Endothelial cell of umbilical vein (primary cell): ENCODE measurements at regions of chr14 and their contacts with region 1.

Region 1: DNA sequence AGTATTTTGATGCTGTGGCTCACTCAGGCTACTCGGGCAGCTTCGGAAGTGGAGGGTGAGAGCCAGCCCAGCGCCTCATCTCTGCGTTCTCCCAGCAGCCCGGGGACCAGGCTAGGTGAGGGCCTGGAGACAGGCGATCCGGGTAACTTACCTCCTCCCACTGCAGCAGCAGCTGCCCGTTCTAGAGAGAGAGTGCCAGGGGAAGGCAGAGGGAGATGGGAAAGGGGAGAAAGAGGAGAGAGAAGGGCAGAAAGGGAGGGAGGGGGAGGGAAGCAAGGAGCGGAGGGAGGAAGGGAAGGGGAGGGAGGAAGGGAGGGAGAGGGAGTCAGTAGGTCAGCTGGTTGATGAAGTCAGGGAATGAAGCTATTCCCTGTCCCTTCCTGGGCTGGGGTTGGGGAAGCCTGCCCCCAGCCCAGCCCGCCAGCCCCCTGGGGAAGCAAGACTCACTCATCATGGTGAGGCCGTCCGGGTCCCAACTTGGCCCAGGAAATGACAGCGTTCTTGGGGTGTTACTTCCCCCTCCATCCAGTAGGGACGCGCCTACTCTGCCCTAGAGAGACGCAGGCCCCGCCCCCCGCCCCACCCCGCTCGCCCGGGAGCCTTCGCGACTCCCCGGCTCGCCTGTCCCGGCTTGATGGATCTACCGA is at the start of gene IFI27L2:
- DNase-seq: peak; percentile 59
- H3K4me3 ChIP-seq: peak within 1 kb of the TSS; percentile 27 to 67 (median 45)
- H3K27ac ChIP-seq: no peak within 1 kb of the TSS
- H3K4me1 ChIP-seq: peaks cover 9% of the 10 kb centered on the region
- H3K27me3 ChIP-seq: peaks cover 0 to 5% of the 10 kb centered on the region in 2 experiments
- CTCF ChIP-seq: peak in 1 of 2 donors; percentile 20
- POLR2A ChIP-seq: no peak
- total RNA-seq, gene IFI27L2: 11.0 and 28.7 TPM in 2 replicates

Region 2: GRCh38 chr14:93939304-93940229 is 189.7 kb before region 1 on chr14:
- CTCF ChIA-PET with region 1: interaction called, 14 read pairs
- POLR2A ChIA-PET with region 1: no interaction called
- dilution Hi-C with region 1: no loop called
- intact Hi-C with region 1: no loop called
- DNase-seq: peak; percentile 53
- H3K4me3 ChIP-seq: no peak overlapping the region
- H3K27ac ChIP-seq: no peak overlapping the region
- H3K4me1 ChIP-seq: no peaks in the 10 kb centered on the region
- H3K27me3 ChIP-seq: peaks cover 0 to 3% of the 10 kb centered on the region in 2 experiments
- CTCF ChIP-seq: peak; percentile 74 to 77
- POLR2A ChIP-seq: no peak

Region 3: GRCh38 chr14:94036313-94037050 is 92.8 kb before region 1 on chr14:
- CTCF ChIA-PET with region 1: interaction called, 45 read pairs
- POLR2A ChIA-PET with region 1: no interaction called
- dilution Hi-C with region 1: no loop called
- intact Hi-C with region 1: loop called (anchors 1 kb)
- DNase-seq: peak; percentile 69
- H3K4me3 ChIP-seq: no peak overlapping the region
- H3K27ac ChIP-seq: no peak overlapping the region
- H3K4me1 ChIP-seq: no peaks in the 10 kb centered on the region
- H3K27me3 ChIP-seq: no peaks in the 10 kb centered on the region
- CTCF ChIP-seq: peak; percentile 83 to 87
- POLR2A ChIP-seq: no peak

Region 4: DNA sequence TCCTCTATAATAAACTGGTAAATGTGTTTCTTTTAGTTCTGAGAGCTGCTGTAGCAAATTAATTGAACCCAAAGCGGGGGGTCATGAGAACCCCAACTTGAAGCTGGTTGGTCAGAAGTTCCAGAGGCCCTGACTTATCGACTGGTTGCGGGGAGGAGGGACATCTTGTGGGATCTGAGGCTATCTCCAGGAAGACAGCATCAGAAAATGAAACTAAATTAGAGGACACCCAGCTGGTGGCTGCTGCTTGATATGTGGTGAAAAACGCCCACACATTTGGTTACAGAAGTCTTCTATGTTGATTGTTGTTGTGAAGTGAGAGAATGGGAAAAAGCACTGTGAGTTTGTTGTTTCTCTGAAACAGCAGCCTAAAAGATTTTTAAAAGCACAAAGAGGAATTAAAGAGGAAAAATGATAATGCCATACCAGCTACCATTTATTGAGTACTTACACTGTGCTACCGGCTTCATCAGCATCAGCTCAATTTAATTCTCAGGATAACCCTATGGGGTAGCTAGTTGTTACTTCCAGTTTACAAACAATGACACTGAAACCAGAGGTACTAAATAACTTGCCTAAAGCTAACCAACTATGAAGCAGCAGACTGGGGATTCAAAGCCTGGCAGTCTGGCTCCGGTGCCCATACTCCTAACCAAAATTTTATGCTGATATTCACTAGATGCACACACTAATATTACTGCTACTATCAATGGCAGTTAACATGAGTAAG is 72.5 kb before region 1 on chr14:
- CTCF ChIA-PET with region 1: interaction called, 22 read pairs
- POLR2A ChIA-PET with region 1: interaction called, 5 read pairs
- dilution Hi-C with region 1: no loop called
- intact Hi-C with region 1: no loop called
- DNase-seq: no peak
- H3K4me3 ChIP-seq: no peak overlapping the region
- H3K27ac ChIP-seq: no peak overlapping the region
- H3K4me1 ChIP-seq: no peaks in the 10 kb centered on the region
- H3K27me3 ChIP-seq: no peaks in the 10 kb centered on the region
- CTCF ChIP-seq: no peak
- POLR2A ChIP-seq: no peak

Region 5: DNA sequence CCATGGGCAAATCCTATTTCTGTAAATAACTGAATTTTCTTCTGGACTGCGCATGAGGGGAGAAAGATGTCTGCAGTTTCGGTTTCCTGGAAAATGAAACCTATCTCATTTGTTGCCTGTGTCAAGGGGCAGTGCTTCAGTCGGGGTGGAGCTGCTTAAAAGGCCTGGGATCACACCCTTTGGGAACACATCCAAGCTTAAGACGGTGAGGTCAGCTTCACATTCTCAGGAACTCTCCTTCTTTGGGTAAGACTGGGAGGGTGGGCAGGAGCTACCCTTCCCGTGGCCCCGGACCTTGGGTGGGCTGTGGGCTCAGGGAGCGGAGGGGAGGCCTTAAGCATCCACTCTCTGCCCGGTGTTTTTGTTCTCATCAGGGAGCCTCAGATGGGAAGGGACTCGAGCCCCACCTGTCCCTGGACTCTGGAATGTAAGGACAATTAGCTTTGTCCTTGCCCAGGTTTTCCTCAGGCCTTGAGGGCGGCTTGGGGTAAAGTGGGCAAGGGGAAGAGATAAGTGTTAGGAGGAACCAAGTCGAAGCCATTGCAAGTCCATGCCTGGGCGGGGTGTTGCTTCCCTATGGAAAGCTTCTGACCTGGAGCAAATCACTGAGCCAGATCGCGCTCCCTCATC is 18.6 kb before region 1 on chr14 and contains the start of gene IFI27:
- CTCF ChIA-PET with region 1: interaction called, 67 read pairs
- POLR2A ChIA-PET with region 1: interaction called, 3 read pairs
- dilution Hi-C with region 1: no loop called
- intact Hi-C with region 1: no loop called
- DNase-seq: peak; percentile 62
- H3K4me3 ChIP-seq: peak within 1 kb of the TSS; percentile 20 to 76 (median 33)
- H3K27ac ChIP-seq: peak within 1 kb of the TSS; percentile 67
- H3K4me1 ChIP-seq: peaks cover 19% of the 10 kb centered on the region
- H3K27me3 ChIP-seq: no peaks in the 10 kb centered on the region
- CTCF ChIP-seq: no peak
- POLR2A ChIP-seq: peak; percentile 85
- total RNA-seq, gene IFI27: 72.0 and 126 TPM in 2 replicates

Region 6: GRCh38 chr14:94180655-94181271 is 51.5 kb after region 1 on chr14:
- CTCF ChIA-PET with region 1: interaction called, 16 read pairs
- POLR2A ChIA-PET with region 1: no interaction called
- dilution Hi-C with region 1: no loop called
- intact Hi-C with region 1: loop called (anchors 1 kb)
- DNase-seq: peak; percentile 48
- H3K4me3 ChIP-seq: no peak overlapping the region
- H3K27ac ChIP-seq: no peak overlapping the region
- H3K4me1 ChIP-seq: no peaks in the 10 kb centered on the region
- H3K27me3 ChIP-seq: peaks cover 22 to 54% of the 10 kb centered on the region in 2 experiments
- CTCF ChIP-seq: peak; percentile 30 to 40
- POLR2A ChIP-seq: no peak